ENCODE measurements at regions of chr4 and their contacts with region 1.

Region 1: DNA sequence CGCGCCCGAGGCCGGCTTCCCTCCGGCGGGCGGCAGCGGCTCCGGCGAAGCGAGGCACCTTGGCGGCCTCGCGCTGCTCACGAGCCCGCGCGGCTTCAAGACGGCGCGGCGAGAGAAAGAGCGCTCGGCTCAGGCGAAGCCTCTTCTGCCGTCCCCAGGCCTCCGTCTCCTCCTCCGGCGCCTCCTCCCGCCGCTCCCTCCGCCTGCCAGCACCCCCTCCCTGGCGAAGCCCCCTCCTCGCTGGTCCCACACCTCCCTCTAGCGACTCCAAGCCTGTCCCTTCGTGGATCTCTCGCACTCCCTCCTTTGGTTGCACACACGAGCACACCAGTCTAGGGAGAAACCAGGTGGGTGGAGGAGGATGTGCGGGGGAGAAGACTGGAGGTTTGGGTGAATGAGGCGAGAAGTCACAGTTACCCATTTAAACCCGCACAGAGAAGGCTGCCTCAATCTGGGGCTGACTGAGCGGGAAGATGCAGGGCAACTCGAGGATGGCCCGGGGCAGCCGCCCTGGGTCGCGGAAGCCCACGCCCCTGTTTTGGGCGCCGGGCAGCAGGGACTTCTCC is at the start of gene CAMK2D:
- DNase-seq: peak; percentile 93
- H3K4me3 Mint-ChIP-seq: peak within 1 kb of the TSS; percentile 89
- H3K27ac Mint-ChIP-seq: peak within 1 kb of the TSS; percentile 93
- H3K4me1 Mint-ChIP-seq: peaks cover 38% of the 10 kb centered on the region
- H3K27me3 Mint-ChIP-seq: peaks cover 2% of the 10 kb centered on the region
- total RNA-seq, gene CAMK2D: 82.5 to 82.9 TPM

Region 2: DNA sequence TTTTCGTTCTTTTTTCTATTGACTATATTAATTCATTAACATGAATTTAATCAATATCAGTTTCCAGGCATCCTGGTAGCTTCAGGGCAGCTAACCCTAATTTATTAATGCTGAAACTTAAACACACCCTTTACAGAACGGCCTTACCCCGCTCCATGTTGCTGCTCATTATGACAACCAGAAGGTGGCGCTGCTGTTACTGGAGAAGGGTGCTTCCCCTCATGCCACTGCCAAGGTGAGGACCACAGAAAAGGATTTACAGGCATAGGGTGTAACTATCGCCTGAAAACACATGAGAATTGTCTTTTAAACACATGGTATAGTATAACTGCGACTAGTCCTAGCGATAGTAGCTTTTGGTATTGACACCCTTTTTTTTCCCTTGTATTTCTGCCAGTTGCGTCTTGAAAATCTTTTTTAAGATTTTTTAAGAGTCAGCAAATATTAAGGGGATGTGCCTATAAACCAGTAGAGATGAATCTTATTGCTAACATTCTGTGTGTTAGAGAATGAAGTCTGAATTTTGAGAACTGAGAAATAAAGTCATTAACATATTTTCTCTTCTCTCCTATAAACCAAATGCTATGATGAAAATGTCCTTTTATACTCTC is 483.3 kb before region 1 on chr4:
- CTCF ChIA-PET with region 1: no interaction called
- POLR2A ChIA-PET with region 1: no interaction called
- intact Hi-C with region 1: loop called (anchors 1 kb)
- DNase-seq: peak; percentile 72
- H3K4me3 Mint-ChIP-seq: no peak overlapping the region
- H3K27ac Mint-ChIP-seq: no peak overlapping the region
- H3K4me1 Mint-ChIP-seq: no peaks in the 10 kb centered on the region
- H3K27me3 Mint-ChIP-seq: peaks cover 8% of the 10 kb centered on the region

Region 3: DNA sequence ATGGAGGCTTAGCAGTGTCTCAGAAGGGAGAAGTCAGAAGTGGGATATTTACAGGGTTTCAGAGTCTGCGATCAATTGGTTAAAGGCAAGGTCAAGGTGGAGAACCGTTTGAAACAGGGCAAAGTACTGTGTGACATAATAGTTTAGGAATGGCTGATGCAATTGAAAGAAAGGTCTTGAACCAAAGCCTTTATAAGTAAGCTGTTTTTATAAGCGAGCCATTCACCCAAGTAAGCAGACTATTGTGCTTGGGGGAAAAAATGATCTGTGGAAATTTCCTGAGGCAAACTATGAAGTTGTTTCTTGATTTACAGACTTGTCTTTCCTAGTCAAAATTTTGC is 327.5 kb before region 1 on chr4:
- CTCF ChIA-PET with region 1: no interaction called
- POLR2A ChIA-PET with region 1: no interaction called
- intact Hi-C with region 1: no loop called
- DNase-seq: no peak
- H3K4me3 Mint-ChIP-seq: no peak overlapping the region
- H3K27ac Mint-ChIP-seq: no peak overlapping the region
- H3K4me1 Mint-ChIP-seq: peaks cover 13% of the 10 kb centered on the region
- H3K27me3 Mint-ChIP-seq: no peaks in the 10 kb centered on the region

Region 4: GRCh38 chr4:113445286-113445685 is 316.4 kb before region 1 on chr4:
- CTCF ChIA-PET with region 1: no interaction called
- POLR2A ChIA-PET with region 1: no interaction called
- intact Hi-C with region 1: loop called (anchors 1 kb)
- DNase-seq: peak; percentile 19
- H3K4me3 Mint-ChIP-seq: no peak overlapping the region
- H3K27ac Mint-ChIP-seq: peak overlapping the region; percentile 64
- H3K4me1 Mint-ChIP-seq: peaks cover 26% of the 10 kb centered on the region
- H3K27me3 Mint-ChIP-seq: no peaks in the 10 kb centered on the region

Region 5: GRCh38 chr4:113625902-113626301 is 135.8 kb before region 1 on chr4:
- CTCF ChIA-PET with region 1: no interaction called
- POLR2A ChIA-PET with region 1: no interaction called
- intact Hi-C with region 1: loop called (anchors 2 kb)
- DNase-seq: peak; percentile 36
- H3K4me3 Mint-ChIP-seq: no peak overlapping the region
- H3K27ac Mint-ChIP-seq: peak overlapping the region; percentile 13
- H3K4me1 Mint-ChIP-seq: peaks cover 45% of the 10 kb centered on the region
- H3K27me3 Mint-ChIP-seq: no peaks in the 10 kb centered on the region

Region 6: DNA sequence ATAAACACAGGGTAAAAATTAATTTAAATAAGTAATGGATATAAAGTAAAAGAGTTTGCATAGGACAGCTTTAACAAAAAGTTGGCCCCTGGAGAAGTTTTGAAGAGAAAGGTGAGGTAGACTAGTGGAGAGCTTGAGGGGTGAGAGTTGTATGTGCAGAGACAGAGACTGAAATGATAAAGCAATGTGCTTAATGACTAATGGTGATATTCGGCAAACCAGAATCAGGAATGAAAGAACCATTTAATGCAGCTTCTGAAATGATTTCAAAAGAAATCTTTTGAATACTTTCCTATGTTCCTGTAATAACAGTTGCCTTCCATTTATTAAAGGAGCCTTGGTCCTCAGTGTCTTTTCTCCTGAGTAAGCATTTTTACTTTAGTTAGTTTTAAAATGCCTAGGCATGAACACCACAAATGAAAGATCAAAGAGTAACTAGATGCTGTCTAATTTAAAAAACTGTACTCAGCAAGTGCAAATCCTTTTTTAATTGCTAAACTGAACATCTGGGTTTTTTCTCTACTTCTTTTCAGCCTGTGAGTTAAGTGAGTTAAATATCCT is 28.7 kb before region 1 on chr4:
- CTCF ChIA-PET with region 1: no interaction called
- POLR2A ChIA-PET with region 1: interaction called, 8 read pairs
- intact Hi-C with region 1: loop called (anchors 1 kb)
- DNase-seq: no peak
- H3K4me3 Mint-ChIP-seq: peak overlapping the region; percentile 0
- H3K27ac Mint-ChIP-seq: peak overlapping the region; percentile 26
- H3K4me1 Mint-ChIP-seq: peaks cover 62% of the 10 kb centered on the region
- H3K27me3 Mint-ChIP-seq: no peaks in the 10 kb centered on the region

Region 7: DNA sequence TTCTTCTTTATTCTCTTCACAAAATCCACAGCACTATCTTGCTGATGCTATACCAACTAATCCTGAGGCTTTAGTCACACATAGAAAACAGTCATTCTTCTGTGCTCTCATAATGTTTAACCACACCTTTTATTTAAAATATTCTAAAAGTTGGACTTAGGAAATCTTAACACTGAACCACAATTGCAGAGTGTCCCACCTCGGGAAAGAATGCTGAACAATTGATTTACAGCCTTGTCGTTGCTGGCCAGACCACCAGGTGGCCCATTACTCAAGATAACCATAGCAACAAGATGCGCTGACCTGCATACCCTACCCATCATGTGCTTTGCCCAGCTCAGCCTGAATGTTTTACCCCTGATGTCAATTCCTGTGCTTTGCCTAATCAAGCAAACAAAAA is 117.0 kb after region 1 on chr4:
- CTCF ChIA-PET with region 1: no interaction called
- POLR2A ChIA-PET with region 1: no interaction called
- intact Hi-C with region 1: no loop called
- DNase-seq: no peak
- H3K4me3 Mint-ChIP-seq: no peak overlapping the region
- H3K27ac Mint-ChIP-seq: no peak overlapping the region
- H3K4me1 Mint-ChIP-seq: peaks cover 4% of the 10 kb centered on the region
- H3K27me3 Mint-ChIP-seq: no peaks in the 10 kb centered on the region

Region 8: DNA sequence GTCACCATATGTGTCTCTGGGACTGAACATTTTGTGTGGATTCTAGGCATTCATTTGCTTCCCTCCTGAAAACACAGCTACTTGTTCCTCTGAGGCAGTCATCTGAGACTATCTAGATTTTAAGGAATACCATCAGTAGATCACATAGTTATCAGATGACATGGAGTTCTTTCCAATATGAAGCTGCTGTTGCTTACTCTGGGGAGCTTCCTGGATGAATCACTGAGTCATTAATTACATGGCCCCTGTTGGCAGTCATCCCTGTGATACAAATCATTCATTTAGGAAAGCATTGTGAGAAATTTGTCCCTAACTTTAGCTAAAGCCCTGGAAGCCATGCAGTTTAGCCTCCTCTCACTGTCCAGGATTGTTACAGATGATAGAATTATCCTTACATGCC is 315.9 kb after region 1 on chr4:
- CTCF ChIA-PET with region 1: no interaction called
- POLR2A ChIA-PET with region 1: no interaction called
- intact Hi-C with region 1: loop called (anchors 5 kb)
- DNase-seq: no peak
- H3K4me3 Mint-ChIP-seq: no peak overlapping the region
- H3K27ac Mint-ChIP-seq: no peak overlapping the region
- H3K4me1 Mint-ChIP-seq: no peaks in the 10 kb centered on the region
- H3K27me3 Mint-ChIP-seq: no peaks in the 10 kb centered on the region